ENCODE measurements at regions of chr19 and their contacts with region 1.

Region 1: DNA sequence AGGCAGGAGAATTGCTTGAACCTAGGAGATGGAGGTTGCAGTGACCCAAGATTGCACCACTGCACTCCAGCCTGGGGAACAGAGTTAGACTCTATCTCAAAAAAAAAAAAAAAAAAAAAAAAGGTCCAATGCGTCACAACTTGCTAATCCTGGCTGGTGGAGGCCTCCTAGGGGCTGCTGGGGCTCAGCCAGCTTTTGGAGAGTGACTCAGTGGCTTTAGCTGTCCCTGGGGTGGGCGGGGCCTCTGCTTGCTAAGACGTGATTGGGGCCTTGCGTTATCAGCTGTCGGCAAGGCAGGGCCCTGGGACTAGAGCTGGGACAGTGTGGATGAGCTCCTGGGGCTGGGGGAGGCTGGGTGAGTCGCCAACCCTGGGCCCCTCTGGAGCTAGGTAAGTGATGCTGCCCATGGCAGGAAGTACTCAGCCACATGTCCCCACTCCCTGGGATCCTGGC is 32.0 kb downstream of the F2RL3 start:
- DNase-seq: no peak
- H3K4me3 ChIP-seq: no peak overlapping the region
- H3K27ac ChIP-seq: no peak overlapping the region
- H3K4me1 ChIP-seq: no peaks in the 10 kb centered on the region
- H3K27me3 ChIP-seq: no peaks in the 10 kb centered on the region
- CTCF ChIP-seq: no peak
- POLR2A ChIP-seq: no peak

Region 2: DNA sequence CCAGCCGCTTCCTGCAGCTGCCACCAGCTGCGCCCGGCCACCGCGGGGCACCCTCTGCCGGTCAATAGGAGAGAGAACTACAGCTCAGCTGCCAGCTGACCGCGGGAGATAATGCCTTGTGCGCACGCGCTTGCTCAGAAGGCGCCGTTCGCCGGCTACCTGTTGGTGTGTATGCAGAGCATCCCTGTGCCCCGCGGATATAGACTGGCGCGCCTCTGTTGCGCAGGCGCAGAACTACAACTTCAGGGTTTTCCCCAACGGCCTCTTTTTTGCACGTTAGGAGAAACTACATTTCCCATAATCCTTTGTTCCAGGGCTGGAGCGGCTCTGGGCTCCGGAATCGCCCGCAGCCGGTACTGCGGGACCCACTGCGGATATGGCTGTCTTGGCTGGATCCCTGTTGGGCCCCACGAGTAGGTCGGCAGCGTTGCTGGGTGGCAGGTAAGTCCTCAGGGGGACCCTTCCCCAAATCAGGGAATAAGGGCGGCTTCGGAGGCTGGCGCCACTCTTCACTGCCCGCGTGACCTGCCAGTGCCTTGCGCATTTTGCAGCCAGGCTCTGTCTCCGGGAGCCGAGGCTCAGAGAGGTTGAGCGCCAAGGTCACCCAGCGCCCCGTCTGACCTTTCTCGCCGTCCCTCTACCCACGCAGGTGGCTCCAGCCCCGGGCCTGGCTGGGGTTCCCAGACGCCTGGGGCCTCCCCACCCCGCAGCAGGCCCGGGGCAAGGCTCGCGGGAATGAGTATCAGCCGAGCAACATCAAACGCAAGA is 384.9 kb after region 1 on chr19 and contains the start of gene MRPL34:
- CTCF ChIA-PET with region 1: no interaction called
- POLR2A ChIA-PET with region 1: interaction called, 13 read pairs
- dilution Hi-C with region 1: no loop called
- intact Hi-C with region 1: no loop called
- DNase-seq: peak; percentile 99
- H3K4me3 ChIP-seq: peak within 1 kb of the TSS; percentile 44 to 72 (median 59)
- H3K27ac ChIP-seq: peak within 1 kb of the TSS; percentile 47
- H3K4me1 ChIP-seq: peaks cover 17% of the 10 kb centered on the region
- H3K27me3 ChIP-seq: no peaks in the 10 kb centered on the region
- CTCF ChIP-seq: peak; percentile 78 to 87
- POLR2A ChIP-seq: peak; percentile 86
- total RNA-seq, gene MRPL34: 55.7 and 61.6 TPM in 2 replicates

Measured in endothelial cell of umbilical vein (primary cell).